Heart left ventricle (tissue), 16 donors: ENCODE measurements at regions of chr2 and their contacts with region 1.

Region 1: GRCh38 chr2:110865188-110865587 is 132.8 kb downstream of the ACOXL start:
- DNase-seq: no peak
- ATAC-seq: no peak
- H3K4me3 ChIP-seq: no peak overlapping the region
- H3K27ac ChIP-seq: no peak overlapping the region
- H3K4me1 ChIP-seq: no peaks in the 10 kb centered on the region
- H3K27me3 ChIP-seq: peaks cover 0 to 48% (median 2%) of the 10 kb centered on the region in 9 donors
- CTCF ChIP-seq: no peak
- POLR2A ChIP-seq: no peak

Region 2: GRCh38 chr2:110881908-110882307 is 16.7 kb after region 1 on chr2:
- intact Hi-C with region 1: loop called in 1 of 10 experiments (anchors 1 kb)
- DNase-seq: no peak
- ATAC-seq: no peak
- H3K4me3 ChIP-seq: no peak overlapping the region
- H3K27ac ChIP-seq: no peak overlapping the region
- H3K4me1 ChIP-seq: no peaks in the 10 kb centered on the region
- H3K27me3 ChIP-seq: peaks cover 0 to 4% (median 0%) of the 10 kb centered on the region in 9 donors
- CTCF ChIP-seq: no peak
- POLR2A ChIP-seq: no peak

Region 3: DNA sequence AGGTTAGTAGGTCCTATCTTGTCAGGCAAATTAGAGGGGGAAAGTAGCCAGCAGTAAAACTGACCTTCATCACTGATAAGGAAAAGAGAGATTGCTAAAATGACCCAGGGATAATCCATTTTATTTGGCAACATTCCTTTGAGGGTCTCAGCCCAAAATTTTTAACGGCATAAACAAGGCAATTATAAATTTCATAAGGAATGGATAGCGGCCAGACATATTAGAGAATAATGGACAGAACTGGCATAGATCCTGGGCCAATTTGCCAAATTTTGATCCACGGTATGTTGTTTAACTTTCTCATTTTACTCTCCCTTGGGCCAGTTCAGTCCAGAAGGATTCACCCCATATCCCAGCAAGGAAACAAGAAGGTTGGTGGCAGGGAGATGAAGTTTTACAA is 85.1 kb after region 1 on chr2:
- intact Hi-C with region 1: loop called in 1 of 10 experiments (anchors 5 kb)
- DNase-seq: no peak
- ATAC-seq: no peak
- H3K4me3 ChIP-seq: no peak overlapping the region
- H3K27ac ChIP-seq: no peak overlapping the region
- H3K4me1 ChIP-seq: peaks cover 0 to 14% (median 7%) of the 10 kb centered on the region in 12 donors
- H3K27me3 ChIP-seq: no peaks in the 10 kb centered on the region
- CTCF ChIP-seq: no peak
- POLR2A ChIP-seq: no peak

Region 4: DNA sequence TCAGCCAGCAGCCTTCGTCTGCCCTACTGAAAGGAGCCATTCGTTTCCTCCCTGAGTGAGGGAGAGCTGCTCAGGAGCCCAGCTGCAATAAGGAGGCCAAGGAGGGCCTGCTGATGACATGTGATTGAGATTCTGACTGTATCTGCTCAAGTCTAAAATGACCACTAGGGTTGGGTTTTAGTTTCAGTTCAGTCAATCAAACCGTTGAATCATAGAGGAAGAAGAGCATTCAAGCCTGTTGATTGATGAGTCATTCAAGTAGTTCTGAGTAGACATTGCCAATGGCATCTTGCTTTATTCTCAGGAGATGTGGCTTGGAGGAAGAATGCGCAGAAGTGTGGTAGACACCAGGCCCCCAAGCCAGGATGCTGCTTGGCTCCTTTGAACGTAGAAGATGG is 235.6 kb after region 1 on chr2:
- intact Hi-C with region 1: no loop called
- DNase-seq: no peak
- ATAC-seq: no peak
- H3K4me3 ChIP-seq: no peak overlapping the region
- H3K27ac ChIP-seq: no peak overlapping the region
- H3K4me1 ChIP-seq: no peaks in the 10 kb centered on the region
- H3K27me3 ChIP-seq: no peaks in the 10 kb centered on the region
- CTCF ChIP-seq: no peak
- POLR2A ChIP-seq: no peak